Activated CD4-positive, alpha-beta memory T cell treated with anti-CD3 and anti-CD28 coated beads for 36 hours (primary cell): ENCODE measurements at regions of chr22 and their contacts with region 1.

Region 1: GRCh38 chr22:38097557-38098409 is 12.7 kb downstream of the BAIAP2L2 start:
- DNase-seq: no peak
- H3K4me3 Mint-ChIP-seq: no peak overlapping the region
- H3K27ac Mint-ChIP-seq: no peak overlapping the region
- H3K4me1 Mint-ChIP-seq: no peaks in the 10 kb centered on the region
- H3K27me3 Mint-ChIP-seq: no peaks in the 10 kb centered on the region

Region 2: DNA sequence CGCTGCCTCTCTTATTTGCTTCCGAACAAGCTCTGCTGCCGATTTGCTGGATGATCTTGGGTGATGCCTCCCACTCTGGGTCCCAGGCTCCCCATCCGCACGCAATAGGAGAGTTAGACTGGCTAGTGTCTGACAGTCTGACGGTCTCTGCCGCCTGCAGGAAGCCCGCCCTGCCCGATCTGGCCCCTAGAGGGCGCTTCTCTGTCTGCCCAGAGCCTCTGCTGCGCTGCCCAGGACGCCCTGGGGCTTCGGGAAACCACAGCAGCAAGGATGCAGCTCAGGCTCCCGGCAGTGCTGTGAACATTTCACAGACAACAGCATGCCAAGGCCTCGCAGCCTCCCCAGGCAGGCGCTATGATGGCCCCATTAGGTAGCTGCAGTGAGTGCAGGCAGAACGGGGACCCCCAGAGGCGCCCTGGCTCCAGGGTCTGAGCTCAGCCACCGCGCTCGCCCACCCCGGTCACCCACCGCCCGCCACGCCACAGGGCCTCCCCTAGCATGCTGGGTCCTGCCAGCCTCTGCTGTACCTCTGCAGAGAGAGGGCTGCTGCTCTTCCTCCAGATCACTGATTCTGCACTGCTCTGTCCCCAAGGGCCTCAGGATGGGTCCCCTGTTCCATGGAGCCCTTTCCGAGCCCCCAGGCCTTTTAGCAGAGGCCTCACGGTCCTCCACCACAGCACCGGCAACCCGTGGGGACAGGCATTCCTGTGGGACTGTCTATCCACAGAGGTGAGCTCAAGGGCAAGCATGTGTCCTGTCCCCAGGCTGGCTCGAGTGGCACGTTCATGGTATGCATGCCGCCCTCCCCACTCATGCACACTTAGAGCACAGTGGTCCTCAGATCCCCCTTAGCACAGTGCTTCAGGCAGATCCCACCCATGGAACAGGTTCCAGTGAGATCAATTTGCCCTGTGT is 17.0 kb after region 1 on chr22:
- CTCF ChIA-PET with region 1: interaction called, 10 read pairs
- POLR2A ChIA-PET with region 1: interaction called, 3 read pairs
- intact Hi-C with region 1: no loop called
- DNase-seq: peak; percentile 85
- H3K4me3 Mint-ChIP-seq: no peak overlapping the region
- H3K27ac Mint-ChIP-seq: no peak overlapping the region
- H3K4me1 Mint-ChIP-seq: peaks cover 3% of the 10 kb centered on the region
- H3K27me3 Mint-ChIP-seq: no peaks in the 10 kb centered on the region

Region 3: DNA sequence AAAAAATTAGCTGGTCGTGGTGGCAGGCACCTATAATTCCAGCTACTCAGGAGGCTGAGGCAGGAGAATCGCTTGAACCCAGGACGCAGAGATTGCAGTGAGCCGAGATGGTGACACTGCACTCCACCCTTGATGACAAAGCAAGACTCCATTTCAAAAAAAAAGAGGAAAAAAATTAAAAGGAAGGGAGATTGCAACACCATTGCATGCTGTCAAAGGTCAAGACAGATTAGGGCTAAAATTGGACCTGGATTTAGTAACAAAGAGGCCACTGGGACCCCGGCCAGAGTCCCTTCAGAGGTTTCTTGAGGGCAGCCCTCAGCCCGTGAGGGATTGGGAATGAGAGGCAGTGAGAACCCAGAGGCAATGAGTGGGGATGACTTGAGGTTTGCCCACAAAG is 95.8 kb after region 1 on chr22:
- CTCF ChIA-PET with region 1: no interaction called
- POLR2A ChIA-PET with region 1: no interaction called
- intact Hi-C with region 1: no loop called
- DNase-seq: no peak
- H3K4me3 Mint-ChIP-seq: no peak overlapping the region
- H3K27ac Mint-ChIP-seq: no peak overlapping the region
- H3K4me1 Mint-ChIP-seq: peaks cover 3% of the 10 kb centered on the region
- H3K27me3 Mint-ChIP-seq: peaks cover 3% of the 10 kb centered on the region